B cell (primary cell): ENCODE measurements at regions of chr12 and their contacts with region 1.

Region 1: GRCh38 chr12:132908145-132909044 is 21.0 kb upstream of the CHFR start:
- DNase-seq: peak; percentile 97
- ATAC-seq: peak; percentile 90
- H3K4me3 ChIP-seq: peak overlapping the region; percentile 21 to 85 (median 59)
- H3K4me3 Mint-ChIP-seq: peak overlapping the region; percentile 96
- H3K27ac ChIP-seq: peak overlapping the region; percentile 63 to 88
- H3K27ac Mint-ChIP-seq: peak overlapping the region; percentile 98
- H3K4me1 ChIP-seq: peaks cover 5 to 24% of the 10 kb centered on the region in 2 donors
- H3K4me1 Mint-ChIP-seq: peaks cover 14% of the 10 kb centered on the region
- H3K27me3 ChIP-seq: peaks cover 0 to 8% (median 2%) of the 10 kb centered on the region in 4 experiments
- H3K27me3 Mint-ChIP-seq: peaks cover 4% of the 10 kb centered on the region
- CTCF ChIP-seq: no peak

Region 2: DNA sequence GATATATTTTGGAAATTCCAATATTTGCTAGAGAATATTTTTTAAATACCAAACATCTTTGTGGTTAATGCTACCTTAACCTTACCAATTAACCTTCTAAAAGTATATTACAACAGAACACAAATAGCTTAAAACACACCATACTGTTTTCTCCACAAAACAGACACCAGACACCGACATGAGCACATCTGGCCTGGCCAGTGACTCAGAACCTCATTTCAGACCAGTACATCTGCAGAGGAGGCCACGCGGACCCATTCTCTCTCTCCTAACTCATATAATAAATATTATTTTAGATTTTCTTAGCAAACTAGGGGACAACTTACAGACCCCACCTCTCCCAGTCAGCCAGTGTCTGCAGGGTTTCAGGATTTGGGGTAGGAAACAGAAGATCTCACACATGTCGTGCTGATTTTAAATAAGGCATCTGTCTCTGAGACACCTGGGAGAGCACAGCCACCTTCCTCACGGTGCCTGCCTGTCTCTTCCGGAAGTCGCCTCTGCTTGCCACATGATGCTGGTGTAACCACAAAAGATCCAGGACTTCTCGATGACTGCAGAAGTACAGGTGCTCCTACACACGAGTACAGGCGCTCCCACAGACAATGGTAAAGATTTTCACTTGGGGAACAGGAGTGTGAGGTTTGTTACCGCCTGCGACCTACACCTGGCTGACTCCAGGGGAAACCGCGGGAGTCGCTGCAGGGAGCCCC is 137.1 kb before region 1 on chr12:
- CTCF ChIA-PET with region 1: interaction called, 4 read pairs
- POLR2A ChIA-PET with region 1: no interaction called
- intact Hi-C with region 1: loop called (anchors 1 kb)
- DNase-seq: peak; percentile 87
- ATAC-seq: peak; percentile 56
- H3K4me3 ChIP-seq: peak overlapping the region in 4 of 5 experiments; percentile 7 to 31 (median 16)
- H3K4me3 Mint-ChIP-seq: peak overlapping the region; percentile 69
- H3K27ac ChIP-seq: peak overlapping the region; percentile 87 to 89
- H3K27ac Mint-ChIP-seq: peak overlapping the region; percentile 88
- H3K4me1 ChIP-seq: peaks cover 60 to 76% of the 10 kb centered on the region in 2 donors
- H3K4me1 Mint-ChIP-seq: peaks cover 61% of the 10 kb centered on the region
- H3K27me3 ChIP-seq: no peaks in the 10 kb centered on the region
- H3K27me3 Mint-ChIP-seq: no peaks in the 10 kb centered on the region
- CTCF ChIP-seq: no peak

Region 3: GRCh38 chr12:132887513-132888351 is 20.7 kb before region 1 on chr12 and contains the start of gene CHFR:
- CTCF ChIA-PET with region 1: interaction called, 6 read pairs
- POLR2A ChIA-PET with region 1: interaction called, 5 read pairs
- intact Hi-C with region 1: loop called (anchors 1 kb)
- DNase-seq: peak; percentile 98
- ATAC-seq: peak; percentile 98
- H3K4me3 ChIP-seq: peak within 1 kb of the TSS; percentile 69 to 90 (median 77)
- H3K4me3 Mint-ChIP-seq: peak within 1 kb of the TSS; percentile 99
- H3K27ac ChIP-seq: peak within 1 kb of the TSS; percentile 92 to 98
- H3K27ac Mint-ChIP-seq: peak within 1 kb of the TSS; percentile 100
- H3K4me1 ChIP-seq: peaks cover 11 to 16% of the 10 kb centered on the region in 2 donors
- H3K4me1 Mint-ChIP-seq: peaks cover 30% of the 10 kb centered on the region
- H3K27me3 ChIP-seq: no peaks in the 10 kb centered on the region
- H3K27me3 Mint-ChIP-seq: peaks cover 6% of the 10 kb centered on the region
- CTCF ChIP-seq: no peak
- total RNA-seq, gene CHFR: 92.5 and 105 TPM in 2 replicates

Region 4: DNA sequence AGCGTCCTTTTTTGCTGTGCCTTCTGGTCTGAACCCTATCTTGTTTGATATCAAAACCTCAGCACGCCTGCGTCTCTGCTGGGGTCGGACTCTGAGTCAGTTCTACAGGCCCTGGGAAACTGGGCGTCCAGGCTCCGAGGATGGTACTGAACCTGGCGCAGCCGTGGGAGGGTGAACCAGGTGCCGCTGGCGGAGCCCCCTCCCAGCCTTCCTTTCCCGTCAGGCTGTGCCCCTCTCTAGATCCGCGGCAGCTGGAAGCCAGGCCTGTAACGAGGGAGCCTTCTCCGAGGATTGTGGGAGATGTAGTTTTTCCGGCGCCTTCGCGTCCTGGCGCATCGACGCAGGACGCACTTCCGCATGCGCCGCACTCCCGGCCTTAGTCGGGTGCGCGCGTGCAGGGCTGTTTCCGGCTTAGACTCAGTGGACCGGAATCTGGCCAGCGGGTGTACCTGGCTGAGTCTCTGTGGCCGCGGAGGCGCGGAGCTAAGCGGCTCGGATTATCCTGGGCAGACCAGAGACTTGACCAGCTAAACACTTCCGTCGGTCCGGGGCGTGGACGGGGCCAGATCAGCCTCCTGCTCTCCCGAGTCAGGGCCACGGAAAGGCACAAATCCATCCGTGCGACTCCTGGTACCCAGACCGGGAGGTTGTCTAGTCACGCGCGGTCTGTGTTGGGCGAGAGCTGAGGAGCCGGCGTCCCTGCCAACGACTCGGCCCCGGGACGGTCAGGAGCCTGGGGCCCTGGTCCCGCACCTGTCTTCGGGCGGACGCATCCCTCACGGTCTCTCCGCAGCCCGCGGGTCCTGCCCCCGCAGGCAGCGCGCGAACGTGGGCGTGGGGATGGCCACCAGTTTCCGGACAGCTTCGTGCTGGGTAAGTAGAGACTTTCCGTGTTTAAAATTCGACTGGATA is 77.9 kb after region 1 on chr12 and contains the start of gene ZNF26:
- CTCF ChIA-PET with region 1: no interaction called
- POLR2A ChIA-PET with region 1: interaction called, 5 read pairs
- intact Hi-C with region 1: loop called (anchors 1 kb)
- DNase-seq: peak; percentile 94
- ATAC-seq: peak; percentile 92
- H3K4me3 ChIP-seq: peak within 1 kb of the TSS; percentile 72 to 95 (median 89)
- H3K4me3 Mint-ChIP-seq: peak within 1 kb of the TSS; percentile 95
- H3K27ac ChIP-seq: peak within 1 kb of the TSS; percentile 75 to 83
- H3K27ac Mint-ChIP-seq: peak within 1 kb of the TSS; percentile 96
- H3K4me1 ChIP-seq: peaks cover 14 to 22% of the 10 kb centered on the region in 2 donors
- H3K4me1 Mint-ChIP-seq: peaks cover 27% of the 10 kb centered on the region
- H3K27me3 ChIP-seq: no peaks in the 10 kb centered on the region
- H3K27me3 Mint-ChIP-seq: no peaks in the 10 kb centered on the region
- CTCF ChIP-seq: no peak
- total RNA-seq, gene ZNF26: 36.0 and 41.5 TPM in 2 replicates

Region 5: GRCh38 chr12:133080368-133081158 is 172.2 kb after region 1 on chr12 and contains the start of gene ZNF140:
- CTCF ChIA-PET with region 1: no interaction called
- POLR2A ChIA-PET with region 1: no interaction called
- intact Hi-C with region 1: loop called (anchors 1 kb)
- DNase-seq: peak; percentile 99
- ATAC-seq: peak; percentile 63
- H3K4me3 ChIP-seq: peak within 1 kb of the TSS; percentile 63 to 95 (median 84)
- H3K4me3 Mint-ChIP-seq: no peak within 1 kb of the TSS
- H3K27ac ChIP-seq: peak within 1 kb of the TSS; percentile 99
- H3K27ac Mint-ChIP-seq: peak within 1 kb of the TSS; percentile 26
- H3K4me1 ChIP-seq: peaks cover 12 to 15% of the 10 kb centered on the region in 2 donors
- H3K4me1 Mint-ChIP-seq: peaks cover 8% of the 10 kb centered on the region
- H3K27me3 ChIP-seq: no peaks in the 10 kb centered on the region
- H3K27me3 Mint-ChIP-seq: no peaks in the 10 kb centered on the region
- CTCF ChIP-seq: peak; percentile 47
- total RNA-seq, gene ZNF140: 24.2 and 26.8 TPM in 2 replicates

Region 6: GRCh38 chr12:133181238-133181959 is 273.0 kb after region 1 on chr12 and contains the start of gene ZNF268:
- CTCF ChIA-PET with region 1: no interaction called
- POLR2A ChIA-PET with region 1: interaction called, 3 read pairs
- intact Hi-C with region 1: loop called (anchors 1 kb)
- DNase-seq: peak; percentile 95
- ATAC-seq: peak; percentile 98
- H3K4me3 ChIP-seq: peak within 1 kb of the TSS; percentile 91 to 100 (median 93)
- H3K4me3 Mint-ChIP-seq: peak within 1 kb of the TSS; percentile 95
- H3K27ac ChIP-seq: peak within 1 kb of the TSS; percentile 78 to 95
- H3K27ac Mint-ChIP-seq: peak within 1 kb of the TSS; percentile 96
- H3K4me1 ChIP-seq: peaks cover 10 to 13% of the 10 kb centered on the region in 2 donors
- H3K4me1 Mint-ChIP-seq: peaks cover 18% of the 10 kb centered on the region
- H3K27me3 ChIP-seq: no peaks in the 10 kb centered on the region
- H3K27me3 Mint-ChIP-seq: no peaks in the 10 kb centered on the region
- CTCF ChIP-seq: peak; percentile 88
- total RNA-seq, gene ZNF268: 32.4 and 37.1 TPM in 2 replicates

Region 7: DNA sequence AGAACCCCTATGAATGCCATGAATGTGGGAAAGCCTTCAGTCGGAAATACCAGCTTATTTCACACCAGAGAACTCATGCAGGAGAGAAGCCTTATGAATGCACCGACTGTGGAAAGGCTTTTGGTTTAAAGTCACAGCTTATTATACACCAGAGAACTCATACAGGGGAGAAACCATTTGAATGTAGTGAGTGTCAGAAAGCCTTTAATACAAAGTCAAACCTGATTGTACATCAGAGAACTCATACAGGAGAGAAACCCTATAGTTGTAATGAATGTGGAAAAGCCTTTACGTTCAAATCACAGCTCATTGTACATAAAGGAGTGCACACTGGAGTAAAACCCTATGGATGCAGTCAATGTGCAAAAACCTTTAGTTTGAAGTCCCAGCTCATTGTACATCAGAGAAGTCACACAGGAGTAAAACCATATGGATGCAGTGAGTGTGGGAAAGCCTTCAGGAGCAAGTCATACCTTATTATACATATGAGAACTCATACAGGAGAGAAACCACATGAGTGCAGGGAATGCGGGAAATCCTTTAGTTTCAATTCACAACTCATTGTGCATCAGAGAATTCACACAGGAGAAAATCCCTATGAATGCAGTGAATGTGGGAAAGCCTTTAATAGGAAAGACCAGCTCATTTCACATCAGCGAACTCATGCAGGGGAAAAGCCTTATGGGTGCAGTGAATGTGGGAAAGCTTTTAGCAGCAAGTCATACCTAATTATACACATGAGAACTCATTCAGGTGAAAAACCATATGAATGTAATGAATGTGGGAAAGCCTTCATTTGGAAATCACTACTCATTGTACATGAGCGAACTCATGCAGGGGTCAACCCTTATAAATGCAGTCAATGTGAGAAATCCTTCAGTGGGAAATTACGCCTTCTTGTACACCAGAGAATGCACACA is 295.2 kb after region 1 on chr12:
- CTCF ChIA-PET with region 1: no interaction called
- POLR2A ChIA-PET with region 1: no interaction called
- intact Hi-C with region 1: no loop called
- DNase-seq: no peak
- ATAC-seq: no peak
- H3K4me3 ChIP-seq: peak overlapping the region in 1 of 5 experiments; percentile 26
- H3K4me3 Mint-ChIP-seq: no peak overlapping the region
- H3K27ac ChIP-seq: no peak overlapping the region
- H3K27ac Mint-ChIP-seq: no peak overlapping the region
- H3K4me1 ChIP-seq: no peaks in the 10 kb centered on the region
- H3K4me1 Mint-ChIP-seq: no peaks in the 10 kb centered on the region
- H3K27me3 ChIP-seq: no peaks in the 10 kb centered on the region
- H3K27me3 Mint-ChIP-seq: no peaks in the 10 kb centered on the region
- CTCF ChIP-seq: no peak